Natural killer cell (primary cell): ENCODE measurements at regions of chr16 and their contacts with region 1.

Region 1: DNA sequence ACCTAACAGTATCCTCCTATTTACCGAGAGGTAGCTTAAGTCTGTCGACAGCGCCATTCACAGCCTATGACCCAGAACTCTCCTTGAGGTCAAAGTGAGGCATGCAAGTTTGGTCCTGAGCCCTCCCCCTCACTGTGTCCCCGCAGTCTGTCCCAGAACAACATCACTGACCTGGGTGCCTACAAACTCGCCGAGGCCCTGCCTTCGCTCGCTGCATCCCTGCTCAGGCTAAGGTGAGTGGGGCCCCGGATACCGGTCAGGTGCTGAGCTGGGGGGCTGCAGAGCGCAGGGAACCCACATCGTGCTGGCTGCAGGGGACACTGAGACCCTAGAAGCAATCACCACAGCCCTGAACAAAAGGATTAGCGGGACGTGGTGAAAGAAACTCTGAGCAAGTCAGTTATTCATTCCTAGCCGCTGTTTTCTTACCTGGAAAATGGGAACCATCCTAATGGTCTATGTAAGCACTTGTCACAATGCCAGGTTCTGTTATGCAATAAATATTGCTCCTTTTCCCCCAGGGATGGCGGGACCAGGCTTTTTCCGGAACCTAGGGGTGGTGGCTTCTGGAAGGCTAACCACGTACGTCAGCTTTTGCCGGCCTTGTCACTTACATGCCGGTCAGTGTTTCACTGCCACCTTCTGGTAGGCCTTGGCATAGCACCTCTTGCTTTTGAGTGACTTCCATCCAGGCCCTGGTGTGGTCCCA is 23.8 kb downstream of the DEXI start:
- DNase-seq: peak; percentile 74 to 88
- ATAC-seq: peak; percentile 89 to 99 (median 98)
- H3K4me3 ChIP-seq: no peak overlapping the region
- H3K4me3 Mint-ChIP-seq: no peak overlapping the region
- H3K27ac ChIP-seq: no peak overlapping the region
- H3K27ac Mint-ChIP-seq: no peak overlapping the region
- H3K4me1 ChIP-seq: peaks cover 8% of the 10 kb centered on the region
- H3K4me1 Mint-ChIP-seq: peaks cover 0 to 5% of the 10 kb centered on the region in 2 donors
- H3K27me3 ChIP-seq: no peaks in the 10 kb centered on the region
- H3K27me3 Mint-ChIP-seq: no peaks in the 10 kb centered on the region
- CTCF ChIP-seq: peak; percentile 91

Region 2: DNA sequence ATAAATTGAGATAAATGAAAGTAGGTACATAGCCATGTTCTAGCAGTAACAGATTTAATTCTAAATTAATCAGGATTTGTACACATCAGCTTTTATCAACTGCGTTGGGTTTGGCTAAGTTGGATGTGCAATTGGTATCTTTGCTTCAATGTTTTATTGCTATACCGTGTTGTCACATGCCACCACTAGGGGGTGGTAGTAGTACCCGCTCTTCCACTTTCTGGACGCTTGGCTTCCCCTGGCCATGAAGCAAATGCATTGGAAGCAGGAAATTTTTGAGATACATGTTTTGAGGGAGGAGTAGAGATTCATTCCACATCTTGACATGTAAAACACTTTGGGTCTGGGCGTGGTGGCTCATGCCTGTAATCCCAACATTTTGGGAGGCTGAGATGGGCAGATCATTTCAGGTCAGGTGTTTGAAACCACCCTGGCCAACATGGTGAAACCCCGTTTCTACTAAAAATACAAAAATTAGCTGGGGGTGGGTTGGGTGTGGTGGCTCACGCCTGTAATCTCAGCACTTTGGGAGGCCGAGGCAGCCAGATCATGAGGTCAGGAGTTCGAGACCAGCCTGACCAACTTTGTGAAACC is 396.7 kb before region 1 on chr16:
- intact Hi-C with region 1: loop called (anchors 2 kb)
- DNase-seq: peak in 1 of 2 donors; percentile 74
- ATAC-seq: peak in 2 of 3 donors; percentile 62 to 76
- H3K4me3 ChIP-seq: no peak overlapping the region
- H3K4me3 Mint-ChIP-seq: no peak overlapping the region
- H3K27ac ChIP-seq: no peak overlapping the region
- H3K27ac Mint-ChIP-seq: no peak overlapping the region
- H3K4me1 ChIP-seq: peaks cover 2% of the 10 kb centered on the region
- H3K4me1 Mint-ChIP-seq: no peaks in the 10 kb centered on the region
- H3K27me3 ChIP-seq: no peaks in the 10 kb centered on the region
- H3K27me3 Mint-ChIP-seq: peaks cover 6 to 8% of the 10 kb centered on the region in 2 donors
- CTCF ChIP-seq: peak; percentile 79

Region 3: GRCh38 chr16:10765772-10766171 is 152.7 kb before region 1 on chr16:
- intact Hi-C with region 1: loop called (anchors 5 kb)
- DNase-seq: peak; percentile 42 to 74
- ATAC-seq: peak; percentile 85 to 90 (median 89)
- H3K4me3 ChIP-seq: no peak overlapping the region
- H3K4me3 Mint-ChIP-seq: peak overlapping the region; percentile 75
- H3K27ac ChIP-seq: peak overlapping the region; percentile 72
- H3K27ac Mint-ChIP-seq: peak overlapping the region; percentile 97
- H3K4me1 ChIP-seq: peaks cover 74% of the 10 kb centered on the region
- H3K4me1 Mint-ChIP-seq: peaks cover 48 to 64% of the 10 kb centered on the region in 2 donors
- H3K27me3 ChIP-seq: no peaks in the 10 kb centered on the region
- H3K27me3 Mint-ChIP-seq: no peaks in the 10 kb centered on the region
- CTCF ChIP-seq: no peak